SK-N-SH (cell line): ENCODE measurements at regions of chr1 and their contacts with region 1.

Region 1: GRCh38 chr1:153465811-153466636 is 5.6 kb upstream of the S100A7 start:
- DNase-seq: peak; percentile 76
- H3K4me3 ChIP-seq: peak overlapping the region in 1 of 2 experiments; percentile 50; a peak in 1 of 4 replicates
- H3K27ac ChIP-seq: no peak overlapping the region
- H3K4me1 ChIP-seq: peaks cover 2 to 4% of the 10 kb centered on the region in 2 experiments; a peak in 1 of 4 replicates
- H3K27me3 ChIP-seq: no peaks in the 10 kb centered on the region; the same call in 1 of the 2 replicates
- CTCF ChIP-seq: peak; percentile 83
- EP300 ChIP-seq: no peak
- RAD21 ChIP-seq: peak; percentile 56

Region 2: DNA sequence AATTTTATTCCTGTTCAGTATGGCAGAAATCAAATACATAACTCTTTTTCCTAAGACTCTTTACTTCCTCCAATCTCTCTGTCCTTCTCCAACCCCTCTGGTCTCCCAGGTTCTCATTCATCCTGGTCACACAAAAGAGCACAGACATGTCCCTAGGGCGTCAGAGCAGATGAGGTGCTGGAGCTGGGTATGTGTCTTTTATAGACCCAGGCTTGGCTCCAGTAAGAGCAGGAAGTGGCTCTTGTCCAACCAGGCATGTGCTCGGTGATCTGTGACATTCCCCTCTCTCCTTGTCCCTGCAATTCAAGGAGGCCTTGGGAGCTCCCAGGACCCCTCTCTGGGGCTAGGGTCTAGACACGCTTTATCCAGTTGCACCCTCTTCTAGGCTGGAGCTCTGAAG is 820.9 kb before region 1 on chr1:
- CTCF ChIA-PET with region 1: no interaction called
- POLR2A ChIA-PET with region 1: no interaction called
- DNase-seq: no peak
- H3K4me3 ChIP-seq: no peak overlapping the region
- H3K27ac ChIP-seq: no peak overlapping the region
- H3K4me1 ChIP-seq: no peaks in the 10 kb centered on the region
- H3K27me3 ChIP-seq: no peaks in the 10 kb centered on the region
- CTCF ChIP-seq: no peak
- EP300 ChIP-seq: no peak
- RAD21 ChIP-seq: no peak

Region 3: DNA sequence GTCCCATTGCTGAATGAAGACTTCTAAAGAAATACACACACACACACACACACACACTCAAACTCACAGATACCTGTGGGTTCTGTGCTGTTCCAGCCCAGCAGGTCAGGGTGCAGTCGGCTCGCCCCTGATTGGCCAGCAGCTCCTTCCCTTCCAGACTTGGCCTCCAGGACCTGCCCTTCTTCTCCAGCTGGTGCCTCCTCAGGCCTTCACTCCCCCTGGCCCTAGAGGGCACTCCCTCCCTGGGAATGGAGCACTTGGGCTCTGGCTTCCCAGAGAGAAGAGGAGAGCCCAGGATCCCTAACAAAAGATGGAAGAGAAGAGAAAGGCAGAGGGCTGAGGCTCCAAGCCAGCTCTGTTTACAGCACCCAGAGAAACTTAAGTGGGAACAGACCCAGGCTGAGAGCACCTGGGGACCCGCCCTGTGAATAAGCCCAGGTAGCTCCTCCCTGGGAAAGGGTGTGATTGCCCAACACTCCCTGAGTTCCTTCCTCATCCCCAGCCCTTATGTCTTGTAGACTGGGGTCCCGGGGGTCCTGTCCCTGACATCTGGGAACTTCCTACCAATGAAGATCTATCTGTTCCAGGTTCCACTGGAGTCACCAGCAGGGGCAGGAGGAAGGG is 153.3 kb before region 1 on chr1 and contains the start of gene PGLYRP3:
- CTCF ChIA-PET with region 1: no interaction called
- POLR2A ChIA-PET with region 1: no interaction called
- DNase-seq: no peak
- H3K4me3 ChIP-seq: no peak within 1 kb of the TSS
- H3K27ac ChIP-seq: no peak within 1 kb of the TSS
- H3K4me1 ChIP-seq: no peaks in the 10 kb centered on the region
- H3K27me3 ChIP-seq: peaks cover 18% of the 10 kb centered on the region; the same call in 1 of the 2 replicates
- CTCF ChIP-seq: no peak
- EP300 ChIP-seq: no peak
- RAD21 ChIP-seq: no peak
- polyA plus RNA-seq, gene PGLYRP3: not detected in 2 replicates

Region 4: DNA sequence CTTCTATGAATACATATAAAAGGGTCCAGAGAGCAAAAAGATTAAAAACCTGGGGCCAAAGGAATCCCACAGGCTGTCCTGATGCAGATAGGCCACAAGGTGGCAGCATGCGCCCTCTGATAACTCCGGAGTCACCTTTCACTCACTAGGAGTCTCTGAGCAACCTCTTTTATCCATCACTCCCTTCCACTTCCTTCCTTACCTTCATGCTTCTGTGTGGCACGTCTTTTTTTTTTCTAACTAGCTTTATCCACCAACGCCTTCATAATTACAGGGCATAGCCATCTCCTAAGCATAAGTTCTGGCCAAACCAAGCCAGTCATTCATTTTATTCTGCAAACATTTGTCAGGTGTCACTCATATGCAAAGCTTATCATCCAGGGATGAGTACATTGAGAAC is 113.5 kb before region 1 on chr1:
- CTCF ChIA-PET with region 1: interaction called, 10 read pairs
- POLR2A ChIA-PET with region 1: no interaction called
- DNase-seq: peak; percentile 77
- H3K4me3 ChIP-seq: no peak overlapping the region; a peak in 1 of 4 replicates
- H3K27ac ChIP-seq: no peak overlapping the region
- H3K4me1 ChIP-seq: no peaks in the 10 kb centered on the region
- H3K27me3 ChIP-seq: peaks cover 64% of the 10 kb centered on the region; the same call in 1 of the 2 replicates
- CTCF ChIP-seq: peak; percentile 93
- EP300 ChIP-seq: no peak
- RAD21 ChIP-seq: peak; percentile 92

Region 5: GRCh38 chr1:153478692-153479618 is 12.9 kb after region 1 on chr1:
- CTCF ChIA-PET with region 1: interaction called, 37 read pairs
- POLR2A ChIA-PET with region 1: no interaction called
- DNase-seq: no peak
- H3K4me3 ChIP-seq: no peak overlapping the region
- H3K27ac ChIP-seq: no peak overlapping the region
- H3K4me1 ChIP-seq: peaks cover 0 to 12% of the 10 kb centered on the region in 2 experiments; a peak in 1 of 4 replicates
- H3K27me3 ChIP-seq: peaks cover 4% of the 10 kb centered on the region; the same call in 1 of the 2 replicates
- CTCF ChIP-seq: no peak
- EP300 ChIP-seq: no peak
- RAD21 ChIP-seq: no peak

Region 6: DNA sequence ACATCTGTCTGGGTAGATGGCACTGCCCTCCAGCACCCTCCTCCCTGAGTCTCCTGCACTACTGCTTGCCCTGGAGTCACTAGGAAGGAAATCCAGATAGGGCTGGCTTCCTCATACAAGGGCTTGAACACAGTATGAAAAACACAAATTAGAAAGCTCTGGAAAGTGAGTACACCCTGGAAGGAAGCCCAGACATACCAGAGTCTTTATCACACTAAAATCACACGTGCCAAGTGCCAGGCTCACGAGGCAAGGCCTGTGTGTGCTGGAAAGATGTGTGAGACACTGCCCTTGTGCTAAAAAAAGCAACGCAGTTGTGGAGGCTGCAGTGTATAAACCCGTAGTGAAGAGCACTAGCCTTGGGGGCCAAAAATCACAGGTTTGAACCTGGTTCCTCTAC is 22.7 kb after region 1 on chr1:
- CTCF ChIA-PET with region 1: interaction called, 79 read pairs
- POLR2A ChIA-PET with region 1: no interaction called
- DNase-seq: no peak
- H3K4me3 ChIP-seq: no peak overlapping the region
- H3K27ac ChIP-seq: no peak overlapping the region; a peak in 1 of 4 replicates
- H3K4me1 ChIP-seq: peaks cover 17 to 21% of the 10 kb centered on the region in 2 experiments; a peak in 3 of 4 replicates
- H3K27me3 ChIP-seq: peaks cover 14% of the 10 kb centered on the region; the same call in 1 of the 2 replicates
- CTCF ChIP-seq: no peak
- EP300 ChIP-seq: no peak
- RAD21 ChIP-seq: no peak

Region 7: DNA sequence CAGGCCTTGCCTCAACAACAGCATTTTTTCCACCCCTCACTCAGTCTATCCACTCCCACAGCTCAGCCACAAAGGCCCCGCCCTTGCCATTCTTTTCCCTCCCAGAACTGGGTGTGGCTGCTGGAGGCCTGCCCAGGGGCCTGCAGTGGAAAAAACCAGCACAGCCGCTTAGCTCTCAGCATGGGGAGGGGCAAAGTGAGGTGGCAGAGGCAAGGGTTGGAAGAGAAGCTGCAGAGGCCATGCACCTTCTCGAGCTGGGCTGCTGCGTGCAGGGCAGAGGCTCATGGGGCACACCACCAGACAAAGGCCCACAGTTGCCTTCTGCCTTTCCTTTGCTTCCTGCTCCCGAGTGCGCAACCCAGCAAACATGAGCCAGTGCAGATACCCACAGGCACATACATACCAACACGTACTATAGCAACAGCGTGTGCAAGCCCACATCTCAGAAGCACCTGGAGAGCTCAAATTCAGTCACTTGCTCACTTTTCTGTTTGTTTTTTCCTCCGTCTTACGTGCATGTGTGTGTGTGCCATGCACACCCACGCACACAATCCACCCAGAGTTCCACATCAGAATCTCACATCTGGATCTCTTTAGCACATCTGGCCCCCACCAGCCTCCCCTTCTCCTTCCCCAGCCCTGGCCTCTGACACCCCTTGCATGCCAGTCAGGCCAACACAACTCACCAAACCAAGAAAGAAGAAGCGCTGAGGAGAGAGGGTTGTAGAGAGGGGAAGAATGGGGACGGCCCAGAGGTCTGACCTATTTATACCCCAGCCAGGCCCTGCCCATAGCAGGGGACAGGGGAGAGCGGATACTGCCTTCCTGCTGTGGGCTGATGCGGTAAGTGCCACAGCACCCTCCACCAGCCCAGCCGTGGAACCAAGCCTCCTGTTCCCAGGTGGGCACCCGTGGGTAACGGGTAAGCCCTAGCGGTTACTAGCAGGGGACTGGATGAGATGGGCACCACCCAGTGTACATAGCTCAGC is 79.3 kb after region 1 on chr1 and contains the start of gene S100A4:
- CTCF ChIA-PET with region 1: no interaction called
- POLR2A ChIA-PET with region 1: no interaction called
- DNase-seq: peak; percentile 83
- H3K4me3 ChIP-seq: no peak within 1 kb of the TSS
- H3K27ac ChIP-seq: peak within 1 kb of the TSS; percentile 72 to 76
- H3K4me1 ChIP-seq: peaks cover 58 to 65% of the 10 kb centered on the region in 2 experiments; a peak in 3 of 4 replicates
- H3K27me3 ChIP-seq: no peaks in the 10 kb centered on the region
- CTCF ChIP-seq: no peak
- EP300 ChIP-seq: peak in 1 of 2 experiments; percentile 52; a peak in 1 of 4 replicates
- RAD21 ChIP-seq: no peak
- polyA plus RNA-seq, gene S100A4: 24.6 and 25.4 TPM in 2 replicates